Activated B cell treated with CpG ODN at 0.5 μM for 24 hours (primary cell): ENCODE measurements at regions of chr6 and their contacts with region 1.

Region 1: DNA sequence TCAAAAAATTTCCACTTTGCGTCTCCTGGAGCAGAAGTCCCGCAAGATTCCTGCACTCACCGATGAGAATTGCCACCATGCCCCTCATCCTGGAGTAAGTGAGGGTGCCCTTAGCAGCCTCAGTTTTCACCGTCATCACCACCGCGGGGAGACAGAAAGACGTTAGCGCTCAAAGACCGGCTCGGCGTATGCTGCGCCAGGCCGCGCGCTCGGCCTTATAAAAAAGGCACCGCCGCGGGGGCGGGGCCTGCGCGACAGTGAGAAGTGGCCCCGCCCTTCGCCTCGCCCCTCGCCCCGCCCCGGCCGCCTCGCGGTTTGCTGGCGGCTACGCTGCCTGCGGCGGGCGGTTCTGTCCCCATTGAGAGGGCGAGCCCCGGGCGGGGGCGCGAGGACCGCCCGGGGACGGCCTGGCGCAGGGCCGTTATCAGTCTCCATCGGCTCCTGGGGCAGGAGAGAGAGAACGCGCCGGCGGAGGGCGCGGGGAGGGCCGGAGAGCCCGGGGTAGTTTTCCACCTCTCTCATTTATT is 122.3 kb upstream of the SLC2A12 start:
- DNase-seq: peak; percentile 94
- ATAC-seq: peak; percentile 83
- H3K4me3 Mint-ChIP-seq: peak overlapping the region; percentile 97
- H3K27ac Mint-ChIP-seq: peak overlapping the region; percentile 91
- H3K4me1 Mint-ChIP-seq: peaks cover 50% of the 10 kb centered on the region
- H3K27me3 Mint-ChIP-seq: no peaks in the 10 kb centered on the region
- CTCF ChIP-seq: no peak

Region 2: GRCh38 chr6:133778414-133779130 is 396.2 kb before region 1 on chr6:
- CTCF ChIA-PET with region 1: no interaction called
- POLR2A ChIA-PET with region 1: no interaction called
- intact Hi-C with region 1: no loop called
- DNase-seq: no peak
- ATAC-seq: no peak
- H3K4me3 Mint-ChIP-seq: no peak overlapping the region
- H3K27ac Mint-ChIP-seq: no peak overlapping the region
- H3K4me1 Mint-ChIP-seq: no peaks in the 10 kb centered on the region
- H3K27me3 Mint-ChIP-seq: no peaks in the 10 kb centered on the region
- CTCF ChIP-seq: no peak

Region 3: GRCh38 chr6:133837801-133838349 is 336.9 kb before region 1 on chr6:
- CTCF ChIA-PET with region 1: no interaction called
- POLR2A ChIA-PET with region 1: no interaction called
- intact Hi-C with region 1: no loop called
- DNase-seq: peak; percentile 29
- ATAC-seq: peak; percentile 49
- H3K4me3 Mint-ChIP-seq: peak overlapping the region; percentile 51
- H3K27ac Mint-ChIP-seq: no peak overlapping the region
- H3K4me1 Mint-ChIP-seq: peaks cover 8% of the 10 kb centered on the region
- H3K27me3 Mint-ChIP-seq: peaks cover 28% of the 10 kb centered on the region
- CTCF ChIP-seq: no peak

Region 4: DNA sequence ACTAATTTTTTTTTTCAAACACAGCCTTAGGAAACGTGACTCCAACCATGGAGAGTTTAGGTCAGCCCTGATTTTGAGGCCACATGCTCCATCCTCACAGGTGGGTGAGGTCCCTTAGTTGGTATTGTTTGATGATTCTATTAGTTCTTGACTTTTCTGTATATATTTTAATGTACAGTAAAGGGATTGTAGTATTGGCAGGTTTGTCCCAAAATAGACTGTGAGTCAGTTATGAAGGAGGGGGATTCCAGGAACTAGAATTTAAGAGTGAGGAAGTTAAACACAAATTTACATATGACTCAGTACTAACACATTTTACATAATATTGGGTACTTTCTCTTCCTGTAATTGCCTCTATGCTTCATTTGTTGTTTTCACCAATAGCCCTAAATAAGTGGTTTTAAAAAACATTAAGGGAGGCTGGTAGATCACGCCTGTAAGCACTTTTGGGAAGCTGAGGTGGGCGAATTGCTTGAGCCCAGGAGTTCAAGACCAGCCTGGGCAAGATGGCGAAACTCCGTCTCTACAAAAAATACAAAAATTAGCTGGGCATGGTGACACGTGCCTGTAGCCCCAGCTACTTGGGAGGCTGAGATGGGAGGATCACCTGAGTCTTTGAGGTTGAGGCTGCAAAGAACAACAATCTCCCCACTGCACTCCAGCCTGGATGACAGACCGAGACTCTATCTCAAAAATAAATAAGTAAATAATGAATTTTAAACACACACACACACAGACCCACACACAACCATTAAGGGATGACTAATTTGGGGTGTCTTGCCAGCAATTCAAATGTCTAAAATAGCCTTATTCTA is 61.4 kb after region 1 on chr6:
- CTCF ChIA-PET with region 1: interaction called, 7 read pairs
- POLR2A ChIA-PET with region 1: interaction called, 6 read pairs
- intact Hi-C with region 1: loop called (anchors 1 kb)
- DNase-seq: no peak
- ATAC-seq: peak; percentile 78
- H3K4me3 Mint-ChIP-seq: peak overlapping the region; percentile 59
- H3K27ac Mint-ChIP-seq: peak overlapping the region; percentile 97
- H3K4me1 Mint-ChIP-seq: peaks cover 57% of the 10 kb centered on the region
- H3K27me3 Mint-ChIP-seq: no peaks in the 10 kb centered on the region
- CTCF ChIP-seq: no peak

Region 5: GRCh38 chr6:134295953-134296553 is 121.3 kb after region 1 on chr6:
- CTCF ChIA-PET with region 1: no interaction called
- POLR2A ChIA-PET with region 1: no interaction called
- intact Hi-C with region 1: no loop called
- DNase-seq: no peak
- ATAC-seq: peak; percentile 37
- H3K4me3 Mint-ChIP-seq: no peak overlapping the region
- H3K27ac Mint-ChIP-seq: peak overlapping the region; percentile 14
- H3K4me1 Mint-ChIP-seq: peaks cover 9% of the 10 kb centered on the region
- H3K27me3 Mint-ChIP-seq: no peaks in the 10 kb centered on the region
- CTCF ChIP-seq: no peak

Region 6: GRCh38 chr6:134317471-134318131 is 142.9 kb after region 1 on chr6 and contains the start of gene SGK1:
- CTCF ChIA-PET with region 1: interaction called, 4 read pairs
- POLR2A ChIA-PET with region 1: interaction called, 6 read pairs
- intact Hi-C with region 1: loop called (anchors 2 kb)
- DNase-seq: peak; percentile 22
- ATAC-seq: peak; percentile 49
- H3K4me3 Mint-ChIP-seq: peak within 1 kb of the TSS; percentile 75
- H3K27ac Mint-ChIP-seq: no peak within 1 kb of the TSS
- H3K4me1 Mint-ChIP-seq: peaks cover 13% of the 10 kb centered on the region
- H3K27me3 Mint-ChIP-seq: peaks cover 18% of the 10 kb centered on the region
- CTCF ChIP-seq: no peak
- total RNA-seq, gene SGK1: 32.8 and 36.2 TPM in 2 replicates

Region 7: DNA sequence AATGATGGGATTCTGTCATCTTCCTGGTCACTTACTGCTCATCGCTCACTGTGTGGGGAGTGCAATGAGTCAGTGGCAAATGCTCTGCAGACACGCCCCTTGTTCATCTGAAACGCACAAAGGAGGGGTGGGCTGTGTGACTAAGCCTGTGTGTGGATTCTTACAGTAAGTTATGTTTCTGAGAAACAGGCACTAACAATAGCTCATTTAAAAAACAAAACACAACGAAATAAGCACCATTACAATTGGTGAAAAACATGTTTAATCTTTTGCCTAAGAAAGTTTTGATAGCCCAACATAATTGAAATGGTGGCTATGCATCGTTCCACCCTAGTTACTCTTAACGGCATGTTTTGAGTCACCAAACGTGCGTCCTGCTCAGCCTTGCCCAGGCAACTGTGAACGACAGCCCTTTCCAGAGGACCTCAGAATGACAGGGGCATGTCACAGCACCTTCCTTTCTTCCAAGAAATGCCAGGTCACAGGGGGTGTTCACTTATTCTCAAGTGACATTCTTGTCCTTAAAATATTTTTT is 261.6 kb after region 1 on chr6:
- CTCF ChIA-PET with region 1: interaction called, 4 read pairs
- POLR2A ChIA-PET with region 1: interaction called, 11 read pairs
- intact Hi-C with region 1: loop called (anchors 1 kb)
- DNase-seq: no peak
- ATAC-seq: peak; percentile 90
- H3K4me3 Mint-ChIP-seq: peak overlapping the region; percentile 70
- H3K27ac Mint-ChIP-seq: peak overlapping the region; percentile 79
- H3K4me1 Mint-ChIP-seq: peaks cover 23% of the 10 kb centered on the region
- H3K27me3 Mint-ChIP-seq: no peaks in the 10 kb centered on the region
- CTCF ChIP-seq: no peak

Region 8: DNA sequence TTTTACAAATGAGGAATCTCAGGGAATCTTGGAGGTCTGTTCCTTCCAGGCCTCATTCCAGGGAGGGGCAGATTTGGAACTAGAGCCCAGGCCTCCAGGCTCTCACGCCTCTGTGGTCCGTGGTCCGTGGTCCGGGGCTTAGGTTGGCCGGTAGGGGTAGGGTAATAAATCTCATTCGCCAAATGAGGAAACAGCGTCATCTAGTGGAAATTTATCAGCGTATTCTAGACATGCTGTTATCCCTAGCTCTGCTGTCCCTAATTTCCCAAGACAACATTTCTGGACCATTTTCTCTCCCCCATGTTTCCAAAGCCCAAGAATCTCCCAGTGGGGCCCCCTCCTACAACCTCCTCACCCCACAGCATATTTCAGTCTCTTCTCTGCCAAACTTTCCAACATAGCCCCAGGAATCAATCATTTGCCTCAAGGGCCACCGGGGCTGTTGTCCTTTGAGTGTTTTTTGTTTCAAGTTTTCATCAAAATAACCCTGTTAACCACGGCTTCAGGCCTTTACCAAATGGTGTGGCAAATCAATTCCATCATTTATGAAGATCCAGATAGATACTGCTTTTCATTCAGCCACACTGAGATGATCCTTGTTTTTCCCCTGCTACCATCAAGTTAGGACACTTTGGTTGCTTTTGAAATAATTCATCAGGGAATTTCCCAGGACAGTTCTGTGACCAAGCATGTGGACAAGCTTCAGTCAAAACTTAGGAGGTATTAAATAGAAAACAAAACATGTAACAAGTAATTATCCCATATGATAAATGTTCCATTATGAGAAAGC is 648.4 kb after region 1 on chr6:
- CTCF ChIA-PET with region 1: interaction called, 20 read pairs
- POLR2A ChIA-PET with region 1: interaction called, 3 read pairs
- intact Hi-C with region 1: loop called (anchors 1 kb)
- DNase-seq: no peak
- ATAC-seq: peak; percentile 77
- H3K4me3 Mint-ChIP-seq: no peak overlapping the region
- H3K27ac Mint-ChIP-seq: no peak overlapping the region
- H3K4me1 Mint-ChIP-seq: peaks cover 10% of the 10 kb centered on the region
- H3K27me3 Mint-ChIP-seq: peaks cover 2% of the 10 kb centered on the region
- CTCF ChIP-seq: peak; percentile 45

Region 9: DNA sequence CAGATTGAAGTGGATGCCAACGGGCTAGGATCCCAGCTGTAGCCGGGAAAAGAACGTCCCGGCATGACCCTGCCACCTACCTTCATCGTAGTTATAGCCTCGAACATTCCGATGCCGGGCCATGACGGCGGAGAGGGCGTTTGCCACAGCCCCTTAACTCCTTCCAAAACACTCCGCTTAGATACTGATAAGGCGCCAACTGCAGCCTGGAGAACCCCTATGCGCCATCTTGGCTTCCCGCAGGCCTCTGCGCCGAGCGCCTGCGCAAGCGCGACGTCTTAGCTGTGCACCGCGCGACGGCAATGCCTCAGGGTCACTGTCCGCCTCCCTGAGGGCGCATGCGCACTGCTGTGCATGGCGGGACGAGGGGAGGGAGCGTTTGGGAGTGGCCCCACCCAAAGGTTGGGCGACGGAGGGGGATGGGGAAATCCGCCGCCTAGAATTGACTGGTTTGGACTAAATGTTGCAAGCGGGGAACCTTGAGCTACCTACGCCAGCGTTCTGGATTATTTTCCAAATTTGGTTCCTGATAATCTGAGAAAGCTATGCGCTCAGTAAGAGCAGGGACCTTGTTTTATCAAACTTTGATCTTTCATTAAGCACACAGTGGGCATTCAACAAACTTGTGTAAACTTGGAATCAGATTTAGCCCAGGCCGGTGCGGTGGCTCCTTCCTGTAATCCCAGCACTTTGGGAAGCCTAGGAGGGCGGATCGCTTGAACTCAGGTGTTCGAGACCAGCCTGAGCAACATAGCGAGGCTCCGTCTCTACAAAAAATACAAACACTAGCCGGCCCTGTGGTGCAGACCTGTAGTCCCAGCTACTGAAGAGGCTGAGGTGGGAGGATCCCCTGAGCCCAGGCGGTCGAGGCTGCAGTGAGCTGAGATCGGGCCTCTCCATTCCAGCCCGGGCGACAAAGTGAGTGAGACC is 880.1 kb after region 1 on chr6 and contains the start of gene HBS1L:
- CTCF ChIA-PET with region 1: no interaction called
- POLR2A ChIA-PET with region 1: no interaction called
- intact Hi-C with region 1: loop called (anchors 1 kb)
- DNase-seq: peak; percentile 94
- ATAC-seq: peak; percentile 98
- H3K4me3 Mint-ChIP-seq: peak within 1 kb of the TSS; percentile 98
- H3K27ac Mint-ChIP-seq: peak within 1 kb of the TSS; percentile 97
- H3K4me1 Mint-ChIP-seq: peaks cover 35% of the 10 kb centered on the region
- H3K27me3 Mint-ChIP-seq: no peaks in the 10 kb centered on the region
- CTCF ChIP-seq: no peak
- total RNA-seq, gene HBS1L: 60.2 and 67.5 TPM in 2 replicates

Region 10: DNA sequence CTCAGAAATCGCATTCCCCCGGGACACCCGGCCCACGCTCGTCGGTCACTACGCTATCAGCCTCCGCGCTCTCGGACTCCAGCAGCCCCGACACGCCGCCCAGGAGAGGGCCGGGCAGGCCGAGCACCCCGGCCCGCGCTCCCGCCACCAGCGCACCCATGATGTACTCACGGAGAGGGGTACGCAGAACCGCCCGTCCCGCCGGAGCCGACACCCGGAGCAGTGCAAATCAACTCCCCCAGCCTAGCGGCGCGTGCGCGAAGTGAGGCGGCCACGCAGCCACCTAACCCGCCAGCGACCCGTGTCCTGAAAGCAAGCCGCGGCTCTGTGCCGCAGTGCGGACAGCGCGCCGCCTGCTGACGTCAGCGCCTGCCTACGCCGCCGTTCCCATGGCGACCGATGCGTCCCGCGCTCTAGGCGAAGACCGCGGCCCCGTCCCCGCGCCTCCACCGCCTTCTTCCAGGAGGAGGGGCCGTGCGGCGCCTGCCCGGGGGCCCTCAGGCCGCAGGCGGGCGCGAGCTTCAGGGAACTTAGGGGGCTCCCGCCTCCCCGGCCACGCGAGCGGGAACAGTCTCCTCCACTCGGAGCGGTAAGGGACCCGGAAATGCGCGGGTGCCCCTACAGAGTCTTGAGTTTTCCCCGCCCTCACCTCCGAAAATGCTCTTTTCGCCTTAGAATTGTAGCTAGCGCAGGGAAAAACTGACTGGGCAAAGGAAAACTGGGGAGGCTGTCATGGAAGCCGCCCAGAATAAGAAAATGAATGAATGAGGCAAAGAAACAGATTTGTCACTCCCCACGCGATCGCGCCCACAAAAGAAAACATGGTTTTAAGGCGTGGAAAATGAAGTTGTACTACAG is 1322.9 kb after region 1 on chr6 and contains the start of gene AHI1:
- CTCF ChIA-PET with region 1: no interaction called
- POLR2A ChIA-PET with region 1: no interaction called
- intact Hi-C with region 1: loop called (anchors 10 kb)
- DNase-seq: peak; percentile 95
- ATAC-seq: peak; percentile 91
- H3K4me3 Mint-ChIP-seq: no peak within 1 kb of the TSS
- H3K27ac Mint-ChIP-seq: no peak within 1 kb of the TSS
- H3K4me1 Mint-ChIP-seq: peaks cover 8% of the 10 kb centered on the region
- H3K27me3 Mint-ChIP-seq: no peaks in the 10 kb centered on the region
- CTCF ChIP-seq: no peak
- total RNA-seq, gene AHI1: 18.2 and 21.0 TPM in 2 replicates